ENCODE measurements at regions of chr3 and their contacts with region 1.

Region 1: DNA sequence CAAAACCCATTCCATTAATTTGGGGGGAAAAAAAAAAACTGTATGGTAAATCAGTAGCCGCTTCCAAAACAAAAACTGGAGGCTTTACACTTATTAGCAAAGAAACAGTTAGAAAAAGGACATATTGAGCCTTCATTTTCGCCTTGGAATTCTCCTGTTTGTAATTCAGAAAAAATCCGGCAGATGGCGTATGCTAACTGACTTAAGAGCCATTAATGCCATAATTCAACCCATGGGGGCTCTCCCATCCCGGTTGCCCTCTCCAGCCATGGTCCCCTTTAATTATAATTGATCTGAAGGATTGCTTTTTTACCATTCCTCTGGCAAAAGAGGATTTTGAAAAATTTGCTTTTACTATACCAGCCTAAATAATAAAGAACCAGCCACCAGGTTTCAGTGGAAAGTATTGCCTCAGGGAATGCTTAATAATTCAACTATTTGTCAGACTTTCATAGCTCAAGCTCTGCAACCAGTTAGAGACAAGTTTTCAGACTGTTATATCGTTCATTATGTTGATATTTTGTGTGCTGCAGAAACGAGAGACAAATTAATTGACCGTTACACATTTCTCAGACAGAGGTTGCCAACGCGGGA is 9.4 kb upstream of the RPL24 start:
- DNase-seq: peak; percentile 42
- H3K4me3 Mint-ChIP-seq: no peak overlapping the region
- H3K27ac Mint-ChIP-seq: no peak overlapping the region
- H3K4me1 Mint-ChIP-seq: no peaks in the 10 kb centered on the region
- H3K27me3 Mint-ChIP-seq: no peaks in the 10 kb centered on the region
- CTCF ChIP-seq: peak; percentile 48

Region 2: DNA sequence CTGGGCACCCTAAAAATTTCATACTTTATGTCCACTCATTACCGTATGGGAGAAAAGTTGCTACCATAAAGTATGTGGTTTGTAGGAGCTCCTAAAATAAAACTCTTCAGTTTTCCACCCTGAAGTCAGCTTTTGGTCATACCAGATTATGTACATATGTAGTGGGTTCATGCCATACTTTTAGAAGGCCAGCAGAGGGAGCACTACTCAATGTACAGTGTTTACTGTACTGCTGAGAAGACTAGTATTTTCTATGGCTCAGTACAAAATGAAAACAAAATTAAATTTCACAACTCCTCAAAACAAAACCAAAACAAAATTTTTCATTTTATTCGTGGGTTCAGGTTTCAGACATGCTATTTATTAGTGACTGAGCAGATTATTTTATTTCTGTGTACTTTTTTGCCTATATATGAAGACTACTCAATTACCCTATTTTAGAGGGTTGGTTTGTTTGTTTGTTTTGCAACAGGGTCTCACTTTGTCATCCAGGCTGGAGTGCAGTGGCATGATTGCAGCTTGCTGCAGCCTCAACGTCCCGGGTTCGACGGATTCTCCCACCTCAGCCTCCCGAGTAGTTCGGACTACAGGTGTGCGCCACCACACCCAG is 107.4 kb after region 1 on chr3:
- CTCF ChIA-PET with region 1: no interaction called
- intact Hi-C with region 1: loop called (anchors 10 kb)
- DNase-seq: peak; percentile 41
- H3K4me3 Mint-ChIP-seq: no peak overlapping the region
- H3K27ac Mint-ChIP-seq: no peak overlapping the region
- H3K4me1 Mint-ChIP-seq: no peaks in the 10 kb centered on the region
- H3K27me3 Mint-ChIP-seq: no peaks in the 10 kb centered on the region
- CTCF ChIP-seq: peak; percentile 40